ENCODE measurements at regions of chr3 and their contacts with region 1.

Region 1: DNA sequence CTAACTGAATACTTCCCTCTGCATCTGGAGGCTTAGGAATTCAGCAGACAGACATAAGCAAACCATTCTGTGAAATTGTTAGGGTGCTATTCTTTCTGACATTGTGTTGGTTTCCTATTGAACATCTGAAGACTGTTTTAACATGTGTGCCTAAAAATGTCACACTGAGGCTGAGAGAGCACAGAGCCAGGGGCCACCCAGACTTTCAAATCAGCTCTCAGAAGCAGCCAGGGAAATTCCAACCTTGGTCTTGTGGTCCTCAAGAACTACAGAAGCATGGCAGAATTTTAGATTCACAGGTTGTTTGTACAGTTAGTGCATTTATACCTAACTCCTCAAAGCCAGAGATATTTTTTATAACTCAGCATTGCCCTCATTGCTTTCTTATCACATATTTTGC is 929.2 kb upstream of the CFAP20DC start:
- DNase-seq: peak in 4 of 9 donors; percentile 32 to 54 (median 39)
- ATAC-seq: peak; percentile 64
- H3K4me3 ChIP-seq: no peak overlapping the region
- H3K4me3 Mint-ChIP-seq: peak overlapping the region; percentile 7 to 74 (median 56)
- H3K27ac ChIP-seq: peak overlapping the region; percentile 47
- H3K27ac Mint-ChIP-seq: peak overlapping the region; percentile 33 to 96 (median 78)
- H3K4me1 ChIP-seq: peaks cover 0 to 55% of the 10 kb centered on the region in 2 donors
- H3K4me1 Mint-ChIP-seq: peaks cover 20 to 94% (median 89%) of the 10 kb centered on the region in 7 donors
- H3K27me3 ChIP-seq: no peaks in the 10 kb centered on the region
- H3K27me3 Mint-ChIP-seq: no peaks in the 10 kb centered on the region

Region 2: GRCh38 chr3:59935025-59935424 is 44.0 kb before region 1 on chr3:
- CTCF ChIA-PET with region 1: no interaction called
- POLR2A ChIA-PET with region 1: no interaction called
- intact Hi-C with region 1: loop called (anchors 2 to 10 kb)
- DNase-seq: peak in 1 of 9 donors; percentile 24
- ATAC-seq: no peak
- H3K4me3 ChIP-seq: no peak overlapping the region
- H3K4me3 Mint-ChIP-seq: peak overlapping the region; percentile 0 to 52 (median 36)
- H3K27ac ChIP-seq: no peak overlapping the region
- H3K27ac Mint-ChIP-seq: peak overlapping the region; percentile 69 to 91 (median 80)
- H3K4me1 ChIP-seq: peaks cover 5 to 74% of the 10 kb centered on the region in 2 donors
- H3K4me1 Mint-ChIP-seq: peaks cover 27 to 100% (median 96%) of the 10 kb centered on the region in 7 donors
- H3K27me3 ChIP-seq: no peaks in the 10 kb centered on the region
- H3K27me3 Mint-ChIP-seq: no peaks in the 10 kb centered on the region

Region 3: DNA sequence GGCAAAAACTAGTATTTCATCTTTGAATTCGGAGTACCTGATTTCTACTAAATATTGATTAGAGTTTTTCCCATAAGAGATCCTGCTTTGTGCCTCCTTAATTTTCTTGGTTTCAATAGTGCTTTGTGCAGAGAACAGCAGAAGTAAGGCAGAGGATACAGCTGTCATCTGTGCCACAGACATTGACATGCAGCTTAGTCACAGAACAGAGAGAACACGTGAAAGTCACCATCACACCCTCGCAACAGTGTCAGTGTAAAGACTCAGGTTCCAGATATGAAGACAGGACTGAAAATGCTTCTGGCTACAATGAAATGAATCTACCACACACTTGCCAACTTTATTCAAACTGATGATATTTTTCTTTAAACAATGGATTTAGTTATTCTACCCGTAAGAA is 13.6 kb after region 1 on chr3:
- CTCF ChIA-PET with region 1: interaction called, 3 read pairs
- POLR2A ChIA-PET with region 1: interaction called, 4 read pairs
- intact Hi-C with region 1: loop called in 1 of 2 experiments (anchors 2 kb)
- DNase-seq: peak in 1 of 9 donors; percentile 25
- ATAC-seq: no peak
- H3K4me3 ChIP-seq: no peak overlapping the region
- H3K4me3 Mint-ChIP-seq: peak overlapping the region in 7 of 10 donors; percentile 43 to 66 (median 57)
- H3K27ac ChIP-seq: peak overlapping the region; percentile 34
- H3K27ac Mint-ChIP-seq: peak overlapping the region in 8 of 9 donors; percentile 67 to 89 (median 82)
- H3K4me1 ChIP-seq: peaks cover 0 to 88% of the 10 kb centered on the region in 2 donors
- H3K4me1 Mint-ChIP-seq: peaks cover 39 to 100% (median 99%) of the 10 kb centered on the region in 7 donors
- H3K27me3 ChIP-seq: no peaks in the 10 kb centered on the region
- H3K27me3 Mint-ChIP-seq: no peaks in the 10 kb centered on the region

Region 4: GRCh38 chr3:60188803-60189202 is 209.8 kb after region 1 on chr3:
- CTCF ChIA-PET with region 1: no interaction called
- POLR2A ChIA-PET with region 1: no interaction called
- intact Hi-C with region 1: no loop called
- DNase-seq: no peak
- ATAC-seq: no peak
- H3K4me3 ChIP-seq: no peak overlapping the region
- H3K4me3 Mint-ChIP-seq: peak overlapping the region in 1 of 10 donors; percentile 50
- H3K27ac ChIP-seq: no peak overlapping the region
- H3K27ac Mint-ChIP-seq: peak overlapping the region in 1 of 9 donors; percentile 91
- H3K4me1 ChIP-seq: no peaks in the 10 kb centered on the region
- H3K4me1 Mint-ChIP-seq: peaks cover 0 to 50% (median 5%) of the 10 kb centered on the region in 7 donors
- H3K27me3 ChIP-seq: no peaks in the 10 kb centered on the region
- H3K27me3 Mint-ChIP-seq: no peaks in the 10 kb centered on the region

Measured in naive thymus-derived CD4-positive, alpha-beta T cell (primary cell).